ENCODE measurements at regions of chr6 and their contacts with region 1.

Region 1: DNA sequence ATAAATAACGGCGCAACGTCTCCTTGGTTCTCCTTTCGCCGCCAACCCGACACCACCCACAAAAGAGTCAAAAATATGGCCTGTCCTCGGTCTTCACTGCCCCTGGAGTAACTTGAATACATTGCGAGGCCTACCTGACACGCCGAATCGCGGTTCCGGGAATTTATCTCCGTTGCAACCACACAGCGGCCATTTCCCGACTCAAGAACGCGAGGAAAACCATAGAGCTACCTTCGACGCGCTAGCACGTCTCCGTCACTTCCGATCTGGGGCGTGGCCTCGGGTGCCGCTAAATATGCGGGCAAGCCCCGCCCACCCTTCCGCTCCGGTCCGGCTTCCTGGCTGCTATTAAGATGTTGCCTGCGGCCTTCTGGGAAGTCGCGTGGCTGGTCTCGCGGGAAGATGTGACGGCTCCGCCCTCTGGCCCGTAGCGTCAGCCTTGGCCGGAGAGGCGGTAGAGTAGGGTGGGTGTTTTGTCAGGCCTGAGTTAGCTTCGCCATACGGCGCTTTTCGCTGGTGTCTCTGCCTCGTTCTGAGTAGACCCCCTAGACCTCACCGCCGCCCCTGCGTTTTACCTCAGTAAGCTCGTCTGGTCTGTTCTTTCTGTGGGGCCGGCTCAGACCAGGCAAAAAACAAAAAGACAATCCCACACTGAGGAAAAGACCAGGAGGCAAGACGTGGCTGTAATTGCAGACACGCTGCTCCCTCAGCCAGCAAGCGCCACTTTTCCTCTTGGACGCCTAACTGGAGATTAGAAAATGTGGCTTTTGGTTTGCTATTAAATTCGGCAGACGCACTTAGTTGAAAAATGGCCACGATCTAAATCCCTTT is at the start of gene BCLAF1:
- DNase-seq: peak; percentile 100
- H3K4me3 Mint-ChIP-seq: peak within 1 kb of the TSS; percentile 94
- H3K27ac Mint-ChIP-seq: peak within 1 kb of the TSS; percentile 100
- H3K4me1 Mint-ChIP-seq: peaks cover 46% of the 10 kb centered on the region
- H3K27me3 Mint-ChIP-seq: no peaks in the 10 kb centered on the region
- total RNA-seq, gene BCLAF1: 128 to 132 TPM

Region 2: DNA sequence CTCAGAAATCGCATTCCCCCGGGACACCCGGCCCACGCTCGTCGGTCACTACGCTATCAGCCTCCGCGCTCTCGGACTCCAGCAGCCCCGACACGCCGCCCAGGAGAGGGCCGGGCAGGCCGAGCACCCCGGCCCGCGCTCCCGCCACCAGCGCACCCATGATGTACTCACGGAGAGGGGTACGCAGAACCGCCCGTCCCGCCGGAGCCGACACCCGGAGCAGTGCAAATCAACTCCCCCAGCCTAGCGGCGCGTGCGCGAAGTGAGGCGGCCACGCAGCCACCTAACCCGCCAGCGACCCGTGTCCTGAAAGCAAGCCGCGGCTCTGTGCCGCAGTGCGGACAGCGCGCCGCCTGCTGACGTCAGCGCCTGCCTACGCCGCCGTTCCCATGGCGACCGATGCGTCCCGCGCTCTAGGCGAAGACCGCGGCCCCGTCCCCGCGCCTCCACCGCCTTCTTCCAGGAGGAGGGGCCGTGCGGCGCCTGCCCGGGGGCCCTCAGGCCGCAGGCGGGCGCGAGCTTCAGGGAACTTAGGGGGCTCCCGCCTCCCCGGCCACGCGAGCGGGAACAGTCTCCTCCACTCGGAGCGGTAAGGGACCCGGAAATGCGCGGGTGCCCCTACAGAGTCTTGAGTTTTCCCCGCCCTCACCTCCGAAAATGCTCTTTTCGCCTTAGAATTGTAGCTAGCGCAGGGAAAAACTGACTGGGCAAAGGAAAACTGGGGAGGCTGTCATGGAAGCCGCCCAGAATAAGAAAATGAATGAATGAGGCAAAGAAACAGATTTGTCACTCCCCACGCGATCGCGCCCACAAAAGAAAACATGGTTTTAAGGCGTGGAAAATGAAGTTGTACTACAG is 792.2 kb before region 1 on chr6 and contains the start of gene AHI1:
- CTCF ChIA-PET with region 1: no interaction called
- POLR2A ChIA-PET with region 1: interaction called, 49 read pairs
- DNase-seq: peak; percentile 88
- H3K4me3 Mint-ChIP-seq: no peak within 1 kb of the TSS
- H3K27ac Mint-ChIP-seq: no peak within 1 kb of the TSS
- H3K4me1 Mint-ChIP-seq: peaks cover 16% of the 10 kb centered on the region
- H3K27me3 Mint-ChIP-seq: peaks cover 3% of the 10 kb centered on the region
- total RNA-seq, gene AHI1: 18.5 to 21.5 TPM

Region 3: DNA sequence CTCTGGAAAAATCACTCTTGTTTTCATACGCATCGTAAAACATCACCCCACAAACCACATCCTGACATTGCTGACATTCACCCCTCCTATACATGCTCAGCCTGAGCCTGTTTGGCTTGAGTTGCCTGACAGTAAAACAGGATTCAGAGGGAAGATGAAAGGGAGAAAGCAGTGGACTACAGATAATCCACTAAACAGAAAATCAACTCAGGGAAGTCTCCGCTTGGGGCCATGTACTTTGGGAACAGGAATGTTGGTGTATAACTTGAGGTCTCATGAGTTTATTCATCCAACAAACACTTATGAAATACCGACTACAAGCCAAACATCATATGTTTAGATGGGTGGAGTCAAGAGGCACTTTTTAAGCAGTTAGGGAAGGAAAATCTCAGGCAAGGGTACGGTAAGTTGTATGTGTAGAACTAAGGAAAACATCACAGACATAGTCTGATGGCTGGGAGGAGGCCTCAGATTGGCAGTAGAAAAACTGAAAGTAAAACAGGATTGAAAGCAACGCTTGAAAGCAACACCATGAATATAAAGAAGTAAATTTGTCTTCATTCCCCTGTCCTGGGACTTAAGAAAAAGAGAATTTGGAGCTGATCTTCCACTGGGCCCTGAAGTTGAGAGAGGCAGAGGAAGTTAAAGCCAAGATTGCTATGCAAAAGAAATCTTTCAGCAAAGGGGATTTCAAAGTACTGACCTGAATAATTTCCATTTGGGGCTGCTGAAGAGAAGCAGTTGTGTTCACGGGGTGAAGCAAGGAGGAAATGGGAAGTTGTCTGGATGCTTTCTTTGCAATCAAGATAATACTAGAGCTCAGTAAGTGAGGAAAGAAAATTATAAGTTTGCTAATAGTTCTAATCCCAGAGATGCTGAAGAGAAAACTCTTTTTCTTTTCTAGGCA is 409.5 kb before region 1 on chr6:
- CTCF ChIA-PET with region 1: no interaction called
- POLR2A ChIA-PET with region 1: interaction called, 11 read pairs
- DNase-seq: peak; percentile 71
- H3K4me3 Mint-ChIP-seq: peak overlapping the region; percentile 76
- H3K27ac Mint-ChIP-seq: peak overlapping the region; percentile 95
- H3K4me1 Mint-ChIP-seq: peaks cover 31% of the 10 kb centered on the region
- H3K27me3 Mint-ChIP-seq: no peaks in the 10 kb centered on the region

Region 4: GRCh38 chr6:136249811-136250685 is 39.7 kb before region 1 on chr6 and contains the start of gene MTFR2:
- CTCF ChIA-PET with region 1: interaction called, 39 read pairs
- POLR2A ChIA-PET with region 1: interaction called, 299 read pairs
- DNase-seq: peak; percentile 96
- H3K4me3 Mint-ChIP-seq: peak within 1 kb of the TSS; percentile 96
- H3K27ac Mint-ChIP-seq: peak within 1 kb of the TSS; percentile 82
- H3K4me1 Mint-ChIP-seq: peaks cover 78% of the 10 kb centered on the region
- H3K27me3 Mint-ChIP-seq: no peaks in the 10 kb centered on the region
- total RNA-seq, gene MTFR2: 20.4 to 21.4 TPM

Region 5: DNA sequence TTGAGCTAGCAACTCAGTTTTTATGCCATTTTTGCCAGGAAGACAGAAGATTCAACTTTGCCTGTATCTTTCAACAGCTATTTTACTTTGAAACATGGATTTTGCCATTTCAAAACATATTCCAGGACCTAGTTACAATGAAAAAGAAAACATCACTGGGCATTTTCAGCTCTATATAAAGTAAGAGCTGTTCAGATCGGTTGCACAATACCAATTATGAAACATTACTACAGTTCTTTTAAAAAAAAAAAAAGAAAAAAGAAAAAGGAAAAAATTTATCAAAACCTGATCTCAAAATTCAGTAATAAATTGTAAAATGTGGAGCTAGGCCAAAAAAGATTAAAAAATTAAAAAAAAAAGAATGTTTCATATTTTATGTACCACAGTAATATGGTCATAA is 15.7 kb before region 1 on chr6:
- CTCF ChIA-PET with region 1: interaction called, 6 read pairs
- POLR2A ChIA-PET with region 1: interaction called, 33 read pairs
- DNase-seq: no peak
- H3K4me3 Mint-ChIP-seq: no peak overlapping the region
- H3K27ac Mint-ChIP-seq: no peak overlapping the region
- H3K4me1 Mint-ChIP-seq: peaks cover 17% of the 10 kb centered on the region
- H3K27me3 Mint-ChIP-seq: no peaks in the 10 kb centered on the region

Region 6: DNA sequence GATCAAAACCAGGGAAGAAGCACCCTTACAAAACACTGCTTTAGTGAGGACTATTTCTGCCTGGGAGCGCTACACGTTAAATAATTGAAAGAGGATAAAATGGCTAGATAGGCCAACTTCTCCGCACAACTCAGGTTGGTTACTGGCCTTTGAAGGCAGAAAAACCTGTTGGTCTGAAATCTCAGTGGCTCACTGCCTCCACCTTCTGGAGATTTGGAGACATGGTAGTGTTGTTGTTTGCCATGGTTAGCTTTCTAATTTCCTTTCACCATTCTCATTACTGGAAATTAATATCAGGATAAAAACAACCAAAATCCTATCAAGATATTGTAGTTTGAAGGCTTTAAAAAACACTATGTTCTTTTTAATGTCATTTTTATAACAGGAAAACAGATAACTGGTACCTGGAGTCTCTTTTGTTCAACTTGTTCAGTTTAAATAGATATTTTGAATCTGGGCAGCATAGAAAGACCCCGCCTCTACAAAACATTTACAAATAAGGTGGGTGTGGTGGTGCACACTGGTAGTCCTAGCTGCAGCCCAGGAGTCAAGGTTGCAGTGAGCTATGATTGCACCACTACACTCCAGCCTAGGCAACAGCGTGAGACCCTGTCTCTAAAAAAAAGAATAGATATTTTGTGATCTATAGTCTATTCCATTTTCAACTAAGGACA is 27.4 kb after region 1 on chr6:
- CTCF ChIA-PET with region 1: interaction called, 14 read pairs
- POLR2A ChIA-PET with region 1: interaction called, 31 read pairs
- DNase-seq: peak; percentile 66
- H3K4me3 Mint-ChIP-seq: no peak overlapping the region
- H3K27ac Mint-ChIP-seq: no peak overlapping the region
- H3K4me1 Mint-ChIP-seq: no peaks in the 10 kb centered on the region
- H3K27me3 Mint-ChIP-seq: peaks cover 6% of the 10 kb centered on the region

Region 7: DNA sequence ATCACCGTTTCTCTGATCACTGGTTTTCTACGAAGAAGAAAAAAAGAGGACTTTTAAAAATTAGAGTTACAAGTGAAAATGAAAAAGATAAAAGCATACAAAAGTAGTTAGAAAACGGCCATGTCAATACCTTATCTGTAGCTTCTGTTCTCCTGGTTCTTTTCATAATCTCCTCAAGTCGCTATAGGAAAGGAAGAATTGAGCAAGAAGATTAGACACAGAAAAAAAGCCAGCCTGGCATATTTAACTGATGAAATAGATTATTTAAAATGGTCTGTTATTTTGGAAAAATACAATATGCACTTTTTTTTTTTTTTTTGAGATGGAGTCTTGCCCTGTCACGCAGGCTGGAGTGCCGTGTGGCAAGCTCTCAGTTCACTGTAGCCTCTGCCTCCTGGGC is 70.1 kb after region 1 on chr6:
- CTCF ChIA-PET with region 1: no interaction called
- POLR2A ChIA-PET with region 1: no interaction called
- DNase-seq: no peak
- H3K4me3 Mint-ChIP-seq: no peak overlapping the region
- H3K27ac Mint-ChIP-seq: no peak overlapping the region
- H3K4me1 Mint-ChIP-seq: no peaks in the 10 kb centered on the region
- H3K27me3 Mint-ChIP-seq: no peaks in the 10 kb centered on the region

Region 8: GRCh38 chr6:136403166-136403980 is 113.6 kb after region 1 on chr6:
- CTCF ChIA-PET with region 1: no interaction called
- POLR2A ChIA-PET with region 1: no interaction called
- DNase-seq: no peak
- H3K4me3 Mint-ChIP-seq: no peak overlapping the region
- H3K27ac Mint-ChIP-seq: no peak overlapping the region
- H3K4me1 Mint-ChIP-seq: no peaks in the 10 kb centered on the region
- H3K27me3 Mint-ChIP-seq: peaks cover 6% of the 10 kb centered on the region

Region 9: GRCh38 chr6:136446579-136447182 is 156.9 kb after region 1 on chr6:
- CTCF ChIA-PET with region 1: no interaction called
- POLR2A ChIA-PET with region 1: no interaction called
- DNase-seq: no peak
- H3K4me3 Mint-ChIP-seq: no peak overlapping the region
- H3K27ac Mint-ChIP-seq: no peak overlapping the region
- H3K4me1 Mint-ChIP-seq: no peaks in the 10 kb centered on the region
- H3K27me3 Mint-ChIP-seq: peaks cover 17% of the 10 kb centered on the region